Heart left ventricle (tissue), 16 donors: ENCODE measurements at regions of chr2 and their contacts with region 1.

Region 1: GRCh38 chr2:3303583-3304406 is 73.8 kb downstream of the EIPR1 start:
- DNase-seq: peak; percentile 84 to 93 (median 87)
- ATAC-seq: peak; percentile 91 to 100 (median 98)
- H3K4me3 ChIP-seq: peak overlapping the region in 7 of 12 donors; percentile 4 to 42 (median 33)
- H3K27ac ChIP-seq: peak overlapping the region in 3 of 12 donors; percentile 8 to 63 (median 37)
- H3K4me1 ChIP-seq: peaks cover 0 to 14% (median 5%) of the 10 kb centered on the region in 12 donors
- H3K27me3 ChIP-seq: no peaks in the 10 kb centered on the region
- CTCF ChIP-seq: peak; percentile 91 to 99 (median 96)
- POLR2A ChIP-seq: no peak

Region 2: GRCh38 chr2:1854729-1855547 is 1448.9 kb before region 1 on chr2:
- intact Hi-C with region 1: loop called in 4 of 10 experiments (anchors 5 to 10 kb)
- DNase-seq: no peak
- ATAC-seq: peak; percentile 47 to 95 (median 86)
- H3K4me3 ChIP-seq: peak overlapping the region in 1 of 12 donors; percentile 18
- H3K27ac ChIP-seq: no peak overlapping the region
- H3K4me1 ChIP-seq: peaks cover 0 to 6% (median 0%) of the 10 kb centered on the region in 12 donors
- H3K27me3 ChIP-seq: peaks cover 8 to 58% (median 22%) of the 10 kb centered on the region in 9 donors
- CTCF ChIP-seq: peak; percentile 13 to 70 (median 58)
- POLR2A ChIP-seq: no peak

Region 3: GRCh38 chr2:3001615-3002560 is 301.9 kb before region 1 on chr2:
- intact Hi-C with region 1: loop called (anchors 2 to 10 kb)
- DNase-seq: no peak
- ATAC-seq: peak; percentile 68 to 76 (median 72)
- H3K4me3 ChIP-seq: no peak overlapping the region
- H3K27ac ChIP-seq: no peak overlapping the region
- H3K4me1 ChIP-seq: no peaks in the 10 kb centered on the region
- H3K27me3 ChIP-seq: peaks cover 0 to 18% (median 1%) of the 10 kb centered on the region in 9 donors
- CTCF ChIP-seq: peak in 10 of 12 donors; percentile 24 to 55 (median 42)
- POLR2A ChIP-seq: no peak

Region 4: DNA sequence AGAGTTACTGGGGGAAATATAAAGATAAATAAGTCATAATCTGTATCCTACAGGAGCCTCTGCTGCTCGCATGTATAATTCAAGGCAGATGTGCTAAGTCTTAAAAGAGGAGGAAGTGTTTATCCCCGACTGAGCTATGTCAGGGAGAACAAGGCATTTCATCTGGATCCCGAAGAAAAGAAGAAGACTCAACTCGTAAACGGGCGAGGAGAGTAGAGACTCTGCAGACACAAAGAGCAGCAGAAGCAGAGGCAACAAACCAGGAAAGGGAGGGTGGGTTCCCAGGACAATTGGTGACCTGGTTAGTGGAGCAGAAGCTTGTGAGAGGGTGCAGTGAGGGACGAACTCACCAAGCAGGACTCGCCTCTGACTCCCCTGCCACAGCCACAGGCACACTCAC is 294.8 kb before region 1 on chr2:
- intact Hi-C with region 1: loop called in 8 of 10 experiments (anchors 5 to 10 kb)
- DNase-seq: no peak
- ATAC-seq: no peak
- H3K4me3 ChIP-seq: no peak overlapping the region
- H3K27ac ChIP-seq: no peak overlapping the region
- H3K4me1 ChIP-seq: no peaks in the 10 kb centered on the region
- H3K27me3 ChIP-seq: peaks cover 0 to 22% (median 2%) of the 10 kb centered on the region in 9 donors
- CTCF ChIP-seq: no peak
- POLR2A ChIP-seq: no peak